Activated T-helper 1 cell treated with anti-CD3 and anti-CD28 coated beads, Interleukin-12 subunit alpha, Interleukin-12 subunit beta, Interleukin-2, Interleukin-4 antibody, amounts not matched to agents 30 ng/mL and 10 ng/mL and 1 ng/mL, durations not matched to agents 14 hours and 24 hours and 36 hours (primary cell): ENCODE measurements at regions of chr17 and their contacts with region 1.

Region 1: GRCh38 chr17:76816590-76817135 is 51.5 kb upstream of the MGAT5B start:
- DNase-seq: peak; percentile 51
- H3K4me3 Mint-ChIP-seq: no peak overlapping the region
- H3K27ac Mint-ChIP-seq: no peak overlapping the region
- H3K4me1 Mint-ChIP-seq: peaks cover 8% of the 10 kb centered on the region
- H3K27me3 Mint-ChIP-seq: peaks cover 8% of the 10 kb centered on the region

Region 2: DNA sequence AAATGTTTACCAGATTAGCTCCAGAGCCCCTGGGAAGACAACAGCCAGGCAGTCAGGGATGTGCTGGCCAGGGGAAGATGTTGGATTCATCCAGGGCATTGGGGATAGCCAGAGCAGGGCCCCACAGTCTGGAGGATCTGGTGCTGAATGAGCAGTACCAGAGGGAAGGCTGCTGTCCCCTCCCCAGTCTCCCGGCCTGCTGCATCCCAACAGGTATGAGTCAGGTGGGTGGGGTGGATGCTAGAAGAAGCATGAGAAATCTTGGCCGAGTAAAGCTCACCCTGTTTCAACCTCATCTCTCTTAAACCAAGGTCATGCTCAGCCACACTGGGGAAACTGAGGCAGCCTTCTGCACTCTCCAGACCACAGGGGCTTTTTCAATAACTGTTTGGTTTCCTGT is 252.3 kb after region 1 on chr17:
- intact Hi-C with region 1: loop called (anchors 1 kb)
- DNase-seq: no peak
- H3K4me3 Mint-ChIP-seq: no peak overlapping the region
- H3K27ac Mint-ChIP-seq: no peak overlapping the region
- H3K4me1 Mint-ChIP-seq: no peaks in the 10 kb centered on the region
- H3K27me3 Mint-ChIP-seq: peaks cover 35% of the 10 kb centered on the region